ENCODE measurements at regions of chr6 and their contacts with region 1.

Region 1: DNA sequence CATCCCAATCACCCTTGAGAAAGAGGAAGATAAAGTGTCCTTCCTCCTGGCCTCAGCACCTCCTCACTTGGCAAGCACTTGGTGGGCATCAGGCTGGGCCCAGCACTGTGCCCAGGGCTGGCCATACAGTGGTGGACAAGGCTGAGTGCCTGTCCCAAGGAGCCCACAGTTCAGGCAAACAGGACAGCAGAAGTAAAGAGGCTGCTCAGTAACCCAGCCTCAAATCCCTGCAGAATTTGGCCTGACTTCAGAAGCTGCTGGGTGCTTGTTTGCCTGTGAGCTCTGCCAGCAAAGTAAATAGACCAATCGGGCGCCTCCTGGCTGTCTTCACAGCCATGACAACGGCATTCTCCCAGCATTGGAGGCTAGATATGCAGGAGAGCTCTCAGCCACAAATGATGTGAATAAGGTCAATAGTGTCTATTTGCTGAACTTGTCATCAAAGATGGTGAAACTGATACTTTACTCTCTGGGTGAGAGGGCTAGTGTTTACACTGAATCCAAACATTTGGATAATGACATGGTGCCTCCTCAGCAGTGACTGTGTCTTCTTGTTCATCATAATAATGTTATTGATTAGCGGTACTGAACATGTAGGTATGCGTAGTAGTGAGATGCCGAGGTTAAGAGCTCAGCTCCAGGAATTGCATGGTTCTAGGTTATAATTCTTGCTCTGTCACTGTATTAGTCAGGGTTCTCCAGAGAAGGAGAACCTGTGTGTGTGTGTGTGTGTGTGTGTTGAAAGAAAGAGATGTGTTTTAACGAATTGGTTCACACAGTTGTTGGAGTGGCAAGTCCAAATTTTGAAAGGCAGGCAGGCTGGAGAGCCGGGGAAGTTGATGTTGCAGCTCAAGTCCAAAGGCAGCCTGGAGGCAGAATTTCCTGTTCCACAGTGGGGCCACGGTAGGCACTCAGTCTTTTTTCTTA is 36.8 kb upstream of the FANCE start:
- DNase-seq: peak; percentile 52
- ATAC-seq: no peak
- H3K4me3 Mint-ChIP-seq: no peak overlapping the region
- H3K27ac Mint-ChIP-seq: peak overlapping the region; percentile 3
- H3K4me1 Mint-ChIP-seq: peaks cover 62% of the 10 kb centered on the region
- H3K27me3 Mint-ChIP-seq: no peaks in the 10 kb centered on the region

Region 2: DNA sequence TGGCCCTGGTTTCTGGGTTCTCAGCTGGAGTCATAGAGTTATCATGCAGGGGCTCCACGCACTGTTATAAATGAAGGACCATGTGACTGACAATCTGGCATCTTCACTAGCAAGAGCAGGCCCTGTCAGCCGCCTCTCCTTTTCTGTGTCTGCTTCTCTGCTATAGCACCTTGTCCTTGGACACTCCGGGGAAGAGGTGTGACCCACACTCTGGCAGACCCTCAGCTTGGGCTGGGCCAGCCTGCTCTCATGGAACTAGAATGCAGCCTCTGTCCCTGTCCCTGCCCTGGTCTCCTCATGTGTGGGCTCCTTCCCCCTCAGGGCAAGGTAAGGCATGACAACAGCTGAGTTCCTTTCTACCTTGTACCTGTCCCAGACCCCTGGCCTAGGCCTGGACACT is 25.9 kb after region 1 on chr6:
- CTCF ChIA-PET with region 1: interaction called, 93 read pairs
- DNase-seq: no peak
- ATAC-seq: no peak
- H3K4me3 Mint-ChIP-seq: no peak overlapping the region
- H3K27ac Mint-ChIP-seq: no peak overlapping the region
- H3K4me1 Mint-ChIP-seq: peaks cover 13% of the 10 kb centered on the region
- H3K27me3 Mint-ChIP-seq: no peaks in the 10 kb centered on the region

Region 3: GRCh38 chr6:35452186-35453090 is 37.1 kb after region 1 on chr6 and contains the start of gene FANCE:
- CTCF ChIA-PET with region 1: interaction called, 93 read pairs
- DNase-seq: peak; percentile 96
- ATAC-seq: peak; percentile 88
- H3K4me3 Mint-ChIP-seq: peak within 1 kb of the TSS; percentile 76
- H3K27ac Mint-ChIP-seq: peak within 1 kb of the TSS; percentile 59
- H3K4me1 Mint-ChIP-seq: peaks cover 34% of the 10 kb centered on the region
- H3K27me3 Mint-ChIP-seq: peaks cover 10% of the 10 kb centered on the region
- total RNA-seq, gene FANCE: 15.4 to 16.0 TPM

Measured in activated CD8-positive, alpha-beta memory T cell treated with anti-CD3 and anti-CD28 coated beads, Interleukin-2, amount 10 ng/mL, durations not matched to agents 7 days and 5 days (primary cell).